ENCODE measurements at regions of chr2 and their contacts with region 1.

Region 1: GRCh38 chr2:200274116-200275075 is 32.1 kb upstream of the SPATS2L start:
- DNase-seq: no peak
- H3K4me3 ChIP-seq: no peak overlapping the region
- H3K27ac ChIP-seq: no peak overlapping the region
- H3K4me1 ChIP-seq: no peaks in the 10 kb centered on the region
- H3K27me3 ChIP-seq: no peaks in the 10 kb centered on the region
- CTCF ChIP-seq: no peak

Region 2: GRCh38 chr2:200735061-200735460 is 460.7 kb after region 1 on chr2:
- CTCF ChIA-PET with region 1: no interaction called
- POLR2A ChIA-PET with region 1: no interaction called
- intact Hi-C with region 1: loop called (anchors 10 kb)
- DNase-seq: peak; percentile 14
- H3K4me3 ChIP-seq: no peak overlapping the region
- H3K27ac ChIP-seq: no peak overlapping the region
- H3K4me1 ChIP-seq: peaks cover 8% of the 10 kb centered on the region
- H3K27me3 ChIP-seq: peaks cover 4% of the 10 kb centered on the region
- CTCF ChIP-seq: no peak

Measured in A673 (cell line).